A673 (cell line): ENCODE measurements at regions of chr11 and their contacts with region 1.

Region 1: DNA sequence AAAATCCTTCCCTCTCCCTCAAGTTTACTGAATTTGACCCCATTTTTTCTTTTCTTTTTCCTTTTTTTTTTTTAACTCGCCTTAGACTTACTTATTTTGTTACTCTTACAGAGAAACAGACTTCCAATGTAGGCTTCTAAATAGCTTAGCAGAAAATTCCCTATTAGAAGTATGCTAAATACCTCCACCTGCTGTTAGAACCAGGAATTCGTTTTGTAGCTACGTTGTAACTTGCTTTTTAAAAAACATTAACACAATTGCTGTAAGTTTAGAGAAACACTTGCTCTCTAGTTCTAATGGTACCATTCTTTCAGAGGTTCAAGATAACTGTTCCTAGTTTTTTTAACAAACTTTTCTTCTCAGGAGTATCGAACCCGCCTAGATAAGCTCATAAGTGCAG is 324.2 kb downstream of the DCDC1 start:
- DNase-seq: peak; percentile 73
- H3K4me3 ChIP-seq: no peak overlapping the region
- H3K27ac ChIP-seq: no peak overlapping the region
- H3K4me1 ChIP-seq: no peaks in the 10 kb centered on the region
- H3K27me3 ChIP-seq: no peaks in the 10 kb centered on the region
- CTCF ChIP-seq: peak; percentile 95

Region 2: DNA sequence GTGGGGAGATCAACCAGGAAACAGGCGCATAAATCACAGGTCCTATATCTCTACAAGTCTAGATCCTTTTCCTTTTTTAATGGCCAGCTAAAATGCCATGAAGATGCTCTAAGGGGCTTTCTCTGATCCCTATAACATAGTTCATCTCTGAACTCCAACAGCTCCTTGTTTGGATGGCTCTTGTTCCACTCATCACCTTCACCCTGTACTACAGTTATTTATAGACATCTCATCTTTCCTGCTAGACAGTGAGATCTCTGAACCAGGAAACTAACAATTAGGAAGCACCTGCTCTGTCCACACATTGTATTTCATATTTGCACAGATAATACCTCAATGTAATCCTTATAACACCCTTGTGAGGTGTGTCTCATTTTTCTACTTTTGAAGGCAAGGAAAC is 1060.1 kb before region 1 on chr11:
- CTCF ChIA-PET with region 1: no interaction called
- POLR2A ChIA-PET with region 1: no interaction called
- intact Hi-C with region 1: no loop called
- DNase-seq: no peak
- H3K4me3 ChIP-seq: no peak overlapping the region
- H3K27ac ChIP-seq: no peak overlapping the region
- H3K4me1 ChIP-seq: no peaks in the 10 kb centered on the region
- H3K27me3 ChIP-seq: no peaks in the 10 kb centered on the region
- CTCF ChIP-seq: no peak

Region 3: GRCh38 chr11:30960387-30960992 is 84.8 kb before region 1 on chr11:
- CTCF ChIA-PET with region 1: interaction called, 52 read pairs
- POLR2A ChIA-PET with region 1: no interaction called
- intact Hi-C with region 1: loop called (anchors 1 kb)
- DNase-seq: peak; percentile 86
- H3K4me3 ChIP-seq: no peak overlapping the region
- H3K27ac ChIP-seq: no peak overlapping the region
- H3K4me1 ChIP-seq: no peaks in the 10 kb centered on the region
- H3K27me3 ChIP-seq: peaks cover 52% of the 10 kb centered on the region
- CTCF ChIP-seq: peak; percentile 99

Region 4: DNA sequence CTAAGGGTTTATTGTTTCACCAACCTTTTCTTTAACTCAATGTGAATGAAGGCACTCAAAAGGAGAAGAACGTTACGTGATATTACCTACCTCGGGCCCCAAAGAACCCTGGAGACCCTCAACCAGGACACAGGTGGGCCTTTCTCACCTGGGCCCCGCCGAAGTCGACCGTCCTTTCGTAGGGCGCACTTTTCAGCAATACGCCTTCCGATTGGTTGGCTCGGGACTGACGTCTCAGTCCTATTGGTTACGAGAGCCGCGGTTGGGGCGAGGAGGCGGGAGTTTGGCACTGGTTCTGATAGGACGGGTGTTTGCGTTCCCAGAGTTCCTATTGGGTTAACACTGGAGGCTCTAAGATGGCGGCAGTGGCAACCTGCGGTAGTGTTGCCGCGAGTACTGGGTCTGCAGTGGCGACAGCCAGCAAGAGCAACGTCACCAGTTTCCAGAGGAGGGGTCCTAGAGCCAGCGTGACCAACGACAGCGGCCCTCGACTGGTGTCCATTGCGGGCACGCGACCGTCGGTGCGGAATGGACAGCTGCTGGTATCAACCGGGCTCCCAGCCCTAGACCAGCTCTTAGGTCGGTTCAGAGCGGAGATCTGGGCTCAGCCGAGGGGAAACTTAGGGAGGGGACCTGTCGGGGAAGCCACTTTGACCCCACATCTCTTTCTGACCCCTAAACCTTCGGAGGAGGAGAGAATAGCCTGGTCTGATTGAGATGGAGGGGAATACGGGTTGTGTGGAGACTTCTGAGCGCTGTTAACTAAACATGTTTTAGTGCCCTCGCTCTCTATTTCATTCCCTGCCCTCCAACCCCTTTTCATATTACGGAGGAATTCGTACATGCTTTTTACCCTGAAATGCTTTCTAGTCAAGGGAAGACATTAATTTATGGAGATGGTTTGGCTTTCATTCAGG is 464.4 kb after region 1 on chr11 and contains the starts of genes ELP4 and IMMP1L:
- CTCF ChIA-PET with region 1: no interaction called
- POLR2A ChIA-PET with region 1: no interaction called
- intact Hi-C with region 1: no loop called
- DNase-seq: peak; percentile 100
- H3K4me3 ChIP-seq: peak within 1 kb of the TSS; percentile 61
- H3K27ac ChIP-seq: peak within 1 kb of the TSS; percentile 82
- H3K4me1 ChIP-seq: peaks cover 24% of the 10 kb centered on the region
- H3K27me3 ChIP-seq: no peaks in the 10 kb centered on the region
- CTCF ChIP-seq: no peak
- total RNA-seq, gene ELP4: 49.4 and 49.7 TPM in 2 replicates
- total RNA-seq, gene IMMP1L: 88.3 and 97.3 TPM in 2 replicates